ENCODE measurements at regions of chr15 and their contacts with region 1.

Region 1: GRCh38 chr15:38563723-38564519 is 693 bp downstream of the RASGRP1 start:
- DNase-seq: peak; percentile 18 to 50
- ATAC-seq: peak; percentile 93 to 97
- H3K4me3 ChIP-seq: peak overlapping the region; percentile 60
- H3K27ac ChIP-seq: peak overlapping the region; percentile 58 to 86; a peak in 5 of 6 replicates
- H3K4me1 ChIP-seq: no peaks in the 10 kb centered on the region
- CTCF ChIP-seq: peak; percentile 72
- EP300 ChIP-seq: no peak
- POLR2A ChIP-seq: no peak
- RAD21 ChIP-seq: peak; percentile 33 to 65; a peak in 4 of 5 replicates

Region 2: GRCh38 chr15:38440353-38441129 is 123.4 kb before region 1 on chr15:
- CTCF ChIA-PET with region 1: interaction called, 11 read pairs
- POLR2A ChIA-PET with region 1: no interaction called
- DNase-seq: peak; percentile 6 to 57
- ATAC-seq: peak; percentile 81 to 82
- H3K4me3 ChIP-seq: no peak overlapping the region
- H3K27ac ChIP-seq: no peak overlapping the region
- H3K4me1 ChIP-seq: no peaks in the 10 kb centered on the region
- CTCF ChIP-seq: peak; percentile 68
- EP300 ChIP-seq: no peak
- POLR2A ChIP-seq: no peak
- RAD21 ChIP-seq: peak; percentile 63 to 71

Region 3: GRCh38 chr15:38589502-38589901 is 25.6 kb after region 1 on chr15:
- CTCF ChIA-PET with region 1: interaction called, 11 read pairs
- POLR2A ChIA-PET with region 1: no interaction called
- DNase-seq: peak; percentile 13 to 49
- ATAC-seq: peak; percentile 71 to 86
- H3K4me3 ChIP-seq: no peak overlapping the region
- H3K27ac ChIP-seq: peak overlapping the region; percentile 64 to 76
- H3K4me1 ChIP-seq: peaks cover 28% of the 10 kb centered on the region
- CTCF ChIP-seq: no peak
- EP300 ChIP-seq: no peak
- POLR2A ChIP-seq: no peak
- RAD21 ChIP-seq: no peak

Region 4: DNA sequence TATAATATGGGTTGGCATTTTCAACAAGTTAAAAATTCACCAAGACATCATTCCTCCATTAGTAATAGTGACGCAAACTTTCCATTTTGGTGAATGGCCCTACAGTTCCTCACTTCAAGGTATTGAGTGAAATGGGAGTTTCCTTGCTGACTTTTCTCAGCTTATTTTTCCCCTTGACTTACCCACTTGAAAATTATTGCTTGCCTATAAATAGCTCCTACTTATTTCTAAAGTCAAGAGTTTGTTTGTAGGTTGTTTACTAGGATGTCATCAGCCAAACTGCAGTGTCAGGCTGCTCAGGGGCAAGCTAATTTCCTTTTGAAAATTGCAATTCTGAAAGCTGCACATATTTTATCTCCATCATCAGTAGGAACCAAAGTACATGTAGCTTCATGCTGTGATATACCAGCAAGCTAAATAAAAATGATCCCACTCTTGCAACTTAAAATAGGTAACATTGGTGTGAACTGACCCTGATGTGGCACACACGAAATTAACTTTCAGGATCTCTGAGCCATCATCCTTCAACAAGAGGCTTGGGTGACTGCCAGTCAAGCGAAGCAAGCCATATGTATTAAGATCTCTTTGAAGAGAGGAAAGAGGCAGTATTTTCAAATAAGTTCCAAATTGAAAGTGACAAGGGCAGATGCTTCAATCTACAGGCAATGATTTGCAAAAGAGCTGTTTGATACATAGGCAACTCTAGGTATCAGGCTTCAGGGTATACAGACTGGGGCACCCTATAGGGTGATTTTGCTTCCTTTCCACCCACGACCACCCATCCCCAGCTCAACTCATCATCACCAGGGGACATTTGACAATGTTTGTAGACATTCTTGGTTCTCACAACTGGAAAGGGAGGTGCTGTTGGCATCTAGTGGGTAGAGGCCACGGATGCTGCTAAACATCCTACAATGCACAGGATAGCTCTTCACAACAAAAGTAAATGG is 67.5 kb after region 1 on chr15:
- CTCF ChIA-PET with region 1: interaction called, 13 read pairs
- POLR2A ChIA-PET with region 1: no interaction called
- DNase-seq: no peak
- ATAC-seq: no peak
- H3K4me3 ChIP-seq: no peak overlapping the region
- H3K27ac ChIP-seq: no peak overlapping the region
- H3K4me1 ChIP-seq: no peaks in the 10 kb centered on the region
- CTCF ChIP-seq: no peak
- EP300 ChIP-seq: no peak
- POLR2A ChIP-seq: no peak
- RAD21 ChIP-seq: no peak

Region 5: DNA sequence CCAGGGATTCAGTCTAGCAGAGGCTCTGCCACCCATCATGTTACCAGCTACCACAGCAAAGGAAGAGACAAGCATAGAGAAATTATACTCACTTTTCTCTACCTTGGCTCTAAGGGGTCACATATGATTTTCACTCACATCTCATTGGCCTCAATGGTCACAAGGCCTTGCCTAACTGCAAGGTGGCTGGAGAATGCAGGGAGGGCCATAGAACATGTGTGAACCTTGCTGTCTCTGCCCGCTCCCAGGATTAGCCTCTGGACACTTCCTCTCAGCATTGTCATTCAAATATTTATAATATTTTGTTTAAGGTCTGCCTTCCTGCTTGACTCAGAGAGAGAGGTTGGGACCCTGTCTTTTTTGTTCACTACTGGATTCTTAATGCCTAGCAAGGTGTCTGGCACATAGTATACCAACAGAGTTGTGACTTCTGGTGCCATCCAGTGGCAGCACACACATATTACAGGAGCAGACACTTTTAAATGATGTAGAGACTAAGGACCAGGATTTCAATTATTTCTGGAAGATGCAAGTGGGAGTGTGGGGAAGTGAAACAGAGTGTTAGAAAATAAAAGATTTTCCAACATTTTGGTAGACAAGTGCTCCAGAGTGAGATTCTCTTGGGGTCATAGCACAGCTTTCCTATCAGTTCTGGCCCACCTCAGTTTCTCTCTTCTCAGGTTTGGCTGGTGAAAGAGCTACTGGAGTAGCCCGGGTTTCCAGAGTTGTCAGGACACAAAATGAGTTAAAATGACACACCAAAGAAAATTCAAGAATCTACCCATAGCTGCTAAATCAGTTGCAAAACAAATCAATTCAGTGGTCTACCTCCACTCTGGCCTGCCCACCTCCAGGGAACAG is 119.7 kb after region 1 on chr15:
- CTCF ChIA-PET with region 1: interaction called, 40 read pairs
- POLR2A ChIA-PET with region 1: no interaction called
- DNase-seq: peak; percentile 35 to 38
- ATAC-seq: peak; percentile 86 to 90
- H3K4me3 ChIP-seq: no peak overlapping the region
- H3K27ac ChIP-seq: no peak overlapping the region
- H3K4me1 ChIP-seq: no peaks in the 10 kb centered on the region
- CTCF ChIP-seq: peak; percentile 60
- EP300 ChIP-seq: no peak
- POLR2A ChIP-seq: no peak
- RAD21 ChIP-seq: peak; percentile 70 to 74

Measured in A549 (cell line).